ENCODE measurements at regions of chr1 and their contacts with region 1.

Region 1: GRCh38 chr1:229661022-229661877 is 35.2 kb downstream of the URB2 start:
- DNase-seq: peak; percentile 59 to 66 (median 62)
- H3K4me3 ChIP-seq: no peak overlapping the region
- H3K4me3 Mint-ChIP-seq: no peak overlapping the region
- H3K27ac ChIP-seq: no peak overlapping the region
- H3K27ac Mint-ChIP-seq: peak overlapping the region in 3 of 7 donors; percentile 13 to 51 (median 50)
- H3K4me1 ChIP-seq: peaks cover 16% of the 10 kb centered on the region
- H3K4me1 Mint-ChIP-seq: peaks cover 3 to 7% (median 4%) of the 10 kb centered on the region in 4 donors
- H3K27me3 ChIP-seq: no peaks in the 10 kb centered on the region
- H3K27me3 Mint-ChIP-seq: no peaks in the 10 kb centered on the region

Region 2: GRCh38 chr1:229470406-229471043 is 190.7 kb before region 1 on chr1:
- CTCF ChIA-PET with region 1: no interaction called
- POLR2A ChIA-PET with region 1: no interaction called
- intact Hi-C with region 1: no loop called
- DNase-seq: no peak
- H3K4me3 ChIP-seq: no peak overlapping the region
- H3K4me3 Mint-ChIP-seq: no peak overlapping the region
- H3K27ac ChIP-seq: no peak overlapping the region
- H3K27ac Mint-ChIP-seq: peak overlapping the region in 1 of 7 donors; percentile 20
- H3K4me1 ChIP-seq: no peaks in the 10 kb centered on the region
- H3K4me1 Mint-ChIP-seq: no peaks in the 10 kb centered on the region
- H3K27me3 ChIP-seq: no peaks in the 10 kb centered on the region
- H3K27me3 Mint-ChIP-seq: no peaks in the 10 kb centered on the region

Region 3: DNA sequence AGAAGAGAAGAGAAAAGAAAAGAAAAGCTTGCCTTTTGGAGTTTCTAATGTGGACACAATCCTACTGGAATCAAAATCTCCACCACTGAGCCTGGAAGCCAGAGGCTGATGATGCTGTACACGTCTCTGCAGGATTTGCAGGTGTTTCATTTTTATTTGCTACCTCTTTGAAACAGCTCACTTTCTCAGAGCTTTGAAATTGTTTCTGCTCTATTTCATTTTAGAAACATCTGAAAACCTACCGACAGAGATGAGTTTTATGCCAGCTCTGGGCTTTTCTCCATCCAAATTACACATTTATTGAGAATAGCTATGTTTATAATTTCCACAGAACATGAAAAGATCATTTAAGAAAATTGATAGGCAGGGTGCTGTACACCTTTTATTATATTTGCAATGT is 11.0 kb after region 1 on chr1:
- CTCF ChIA-PET with region 1: interaction called, 10 read pairs
- POLR2A ChIA-PET with region 1: no interaction called
- intact Hi-C with region 1: no loop called
- DNase-seq: no peak
- H3K4me3 ChIP-seq: no peak overlapping the region
- H3K4me3 Mint-ChIP-seq: no peak overlapping the region
- H3K27ac ChIP-seq: no peak overlapping the region
- H3K27ac Mint-ChIP-seq: no peak overlapping the region
- H3K4me1 ChIP-seq: no peaks in the 10 kb centered on the region
- H3K4me1 Mint-ChIP-seq: peaks cover 0 to 6% (median 0%) of the 10 kb centered on the region in 4 donors
- H3K27me3 ChIP-seq: no peaks in the 10 kb centered on the region
- H3K27me3 Mint-ChIP-seq: peaks cover 0 to 2% of the 10 kb centered on the region in 2 donors

Region 4: DNA sequence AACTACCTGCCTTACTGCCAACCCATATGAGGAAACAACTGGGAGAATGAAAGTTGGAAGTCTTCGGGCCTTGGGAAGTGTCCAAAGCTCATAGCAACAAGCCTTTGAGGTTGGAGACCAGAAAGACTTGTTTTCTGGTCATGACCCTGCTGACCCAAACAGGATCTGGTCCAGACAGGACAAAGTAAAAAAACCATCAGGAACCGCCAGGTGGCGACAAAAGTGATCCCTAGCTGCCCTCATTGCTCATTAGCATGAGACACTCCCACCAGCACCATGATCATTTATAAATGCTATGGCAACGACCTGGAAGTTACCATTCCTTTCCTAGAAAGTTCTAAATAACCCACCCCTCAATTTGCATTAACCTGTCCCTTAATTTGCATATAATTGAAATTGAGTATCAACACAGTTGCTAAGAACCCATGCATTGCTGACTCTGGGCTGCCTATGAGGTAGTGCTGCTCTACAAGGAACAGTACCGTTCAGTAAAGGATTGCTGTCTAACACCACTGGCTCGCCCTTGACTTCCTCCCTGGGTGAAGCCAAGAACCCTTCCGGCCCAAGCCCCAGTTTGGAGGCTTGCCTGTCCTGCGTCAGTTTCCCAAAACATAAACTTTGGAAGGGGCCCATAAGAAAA is 53.8 kb after region 1 on chr1:
- CTCF ChIA-PET with region 1: no interaction called
- POLR2A ChIA-PET with region 1: no interaction called
- intact Hi-C with region 1: loop called (anchors 2 kb)
- DNase-seq: peak in 4 of 5 donors; percentile 18 to 39 (median 26)
- H3K4me3 ChIP-seq: no peak overlapping the region
- H3K4me3 Mint-ChIP-seq: no peak overlapping the region
- H3K27ac ChIP-seq: no peak overlapping the region
- H3K27ac Mint-ChIP-seq: no peak overlapping the region
- H3K4me1 ChIP-seq: no peaks in the 10 kb centered on the region
- H3K4me1 Mint-ChIP-seq: no peaks in the 10 kb centered on the region
- H3K27me3 ChIP-seq: no peaks in the 10 kb centered on the region
- H3K27me3 Mint-ChIP-seq: peaks cover 2 to 5% of the 10 kb centered on the region in 2 donors

Region 5: GRCh38 chr1:229856009-229856650 is 194.9 kb after region 1 on chr1:
- CTCF ChIA-PET with region 1: no interaction called
- POLR2A ChIA-PET with region 1: no interaction called
- intact Hi-C with region 1: no loop called
- DNase-seq: no peak
- H3K4me3 ChIP-seq: no peak overlapping the region
- H3K4me3 Mint-ChIP-seq: peak overlapping the region; percentile 75 to 87 (median 84)
- H3K27ac ChIP-seq: no peak overlapping the region
- H3K27ac Mint-ChIP-seq: peak overlapping the region in 5 of 7 donors; percentile 17 to 82 (median 31)
- H3K4me1 ChIP-seq: no peaks in the 10 kb centered on the region
- H3K4me1 Mint-ChIP-seq: peaks cover 5 to 8% (median 6%) of the 10 kb centered on the region in 4 donors
- H3K27me3 ChIP-seq: no peaks in the 10 kb centered on the region
- H3K27me3 Mint-ChIP-seq: peaks cover 3% of the 10 kb centered on the region in 2 donors

Region 6: DNA sequence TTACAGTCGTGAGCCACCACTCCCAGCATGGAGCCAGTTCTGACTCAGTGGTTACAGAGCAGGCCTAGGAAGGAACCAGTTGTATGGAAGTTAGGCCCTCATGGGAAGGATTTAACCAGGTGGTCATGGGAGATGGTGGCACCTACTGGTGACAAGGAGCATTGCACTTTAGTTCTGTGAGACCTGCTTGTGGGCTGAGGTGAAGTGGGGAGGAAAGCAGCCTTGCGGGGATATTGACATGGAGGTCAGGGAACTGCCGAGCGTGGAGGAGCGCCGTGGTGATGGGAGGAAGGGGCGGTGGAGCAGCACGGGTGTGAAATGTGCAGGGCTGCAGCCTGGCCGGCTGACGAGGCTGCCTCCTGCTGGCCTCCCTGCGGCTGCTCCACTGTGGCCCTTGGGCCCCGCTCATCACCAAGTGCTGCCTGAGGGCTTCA is 506.2 kb after region 1 on chr1:
- CTCF ChIA-PET with region 1: interaction called, 49 read pairs
- POLR2A ChIA-PET with region 1: no interaction called
- intact Hi-C with region 1: no loop called
- DNase-seq: peak; percentile 30 to 52 (median 47)
- H3K4me3 ChIP-seq: no peak overlapping the region
- H3K4me3 Mint-ChIP-seq: peak overlapping the region in 1 of 8 donors; percentile 7
- H3K27ac ChIP-seq: no peak overlapping the region
- H3K27ac Mint-ChIP-seq: peak overlapping the region in 3 of 7 donors; percentile 3 to 9 (median 9)
- H3K4me1 ChIP-seq: peaks cover 14% of the 10 kb centered on the region
- H3K4me1 Mint-ChIP-seq: peaks cover 14 to 25% (median 24%) of the 10 kb centered on the region in 4 donors
- H3K27me3 ChIP-seq: no peaks in the 10 kb centered on the region
- H3K27me3 Mint-ChIP-seq: no peaks in the 10 kb centered on the region

Region 7: DNA sequence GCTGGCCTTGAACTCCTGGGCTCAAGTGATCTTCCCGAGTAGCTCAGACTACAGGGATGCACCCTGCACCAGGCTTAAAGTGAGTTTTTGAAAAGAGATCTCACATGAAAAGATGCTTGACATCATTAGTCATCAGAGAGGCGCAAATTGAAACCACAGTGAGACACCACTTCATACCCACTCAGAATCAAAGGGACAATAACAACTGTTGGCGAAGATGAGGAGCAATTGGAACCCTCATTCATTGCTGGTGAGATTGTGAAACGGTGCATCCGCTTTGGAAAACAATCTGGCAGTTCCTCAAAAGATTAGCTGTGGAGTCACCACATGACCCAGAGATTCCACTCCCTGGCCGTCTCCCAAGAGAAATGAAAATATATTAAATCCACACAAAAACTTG is 642.6 kb after region 1 on chr1:
- CTCF ChIA-PET with region 1: interaction called, 62 read pairs
- POLR2A ChIA-PET with region 1: no interaction called
- intact Hi-C with region 1: no loop called
- DNase-seq: no peak
- H3K4me3 ChIP-seq: no peak overlapping the region
- H3K4me3 Mint-ChIP-seq: no peak overlapping the region
- H3K27ac ChIP-seq: no peak overlapping the region
- H3K27ac Mint-ChIP-seq: no peak overlapping the region
- H3K4me1 ChIP-seq: no peaks in the 10 kb centered on the region
- H3K4me1 Mint-ChIP-seq: peaks cover 0 to 3% (median 0%) of the 10 kb centered on the region in 4 donors
- H3K27me3 ChIP-seq: no peaks in the 10 kb centered on the region
- H3K27me3 Mint-ChIP-seq: no peaks in the 10 kb centered on the region

Region 8: GRCh38 chr1:230310381-230311163 is 649.3 kb after region 1 on chr1:
- CTCF ChIA-PET with region 1: interaction called, 62 read pairs
- POLR2A ChIA-PET with region 1: no interaction called
- intact Hi-C with region 1: loop called (anchors 1 kb)
- DNase-seq: peak; percentile 51 to 60 (median 57)
- H3K4me3 ChIP-seq: no peak overlapping the region
- H3K4me3 Mint-ChIP-seq: no peak overlapping the region
- H3K27ac ChIP-seq: no peak overlapping the region
- H3K27ac Mint-ChIP-seq: no peak overlapping the region
- H3K4me1 ChIP-seq: peaks cover 3% of the 10 kb centered on the region
- H3K4me1 Mint-ChIP-seq: peaks cover 0 to 6% (median 1%) of the 10 kb centered on the region in 4 donors
- H3K27me3 ChIP-seq: no peaks in the 10 kb centered on the region
- H3K27me3 Mint-ChIP-seq: peaks cover 4 to 7% of the 10 kb centered on the region in 2 donors